ENCODE measurements at regions of chr6 and their contacts with region 1.

Region 1: GRCh38 chr6:95819939-95820338 is 195.8 kb upstream of the FUT9 start:
- DNase-seq: no peak
- ATAC-seq: no peak
- H3K4me3 ChIP-seq: no peak overlapping the region
- H3K27ac ChIP-seq: no peak overlapping the region
- H3K4me1 ChIP-seq: peaks cover 39% of the 10 kb centered on the region
- H3K27me3 ChIP-seq: no peaks in the 10 kb centered on the region
- CTCF ChIP-seq: peak; percentile 20; the same call in 1 of the 2 replicates
- EP300 ChIP-seq: no peak
- POLR2A ChIP-seq: no peak
- RAD21 ChIP-seq: no peak

Region 2: GRCh38 chr6:95577304-95578105 is 242.4 kb before region 1 on chr6 and contains the start of gene MANEA:
- CTCF ChIA-PET with region 1: no interaction called
- POLR2A ChIA-PET with region 1: no interaction called
- in situ Hi-C with region 1: no loop called
- intact Hi-C with region 1: loop called (anchors 5 kb)
- DNase-seq: peak; percentile 61
- ATAC-seq: peak; percentile 96
- H3K4me3 ChIP-seq: peak within 1 kb of the TSS; percentile 73 to 99 (median 78)
- H3K27ac ChIP-seq: peak within 1 kb of the TSS; percentile 83
- H3K4me1 ChIP-seq: peaks cover 35% of the 10 kb centered on the region
- H3K27me3 ChIP-seq: no peaks in the 10 kb centered on the region; a peak in 1 of 5 replicates
- CTCF ChIP-seq: 0 out of 2 replicates have a peak, but pooled peaks have one; percentile 11
- EP300 ChIP-seq: no peak
- POLR2A ChIP-seq: peak; percentile 56 to 61; a peak in 3 of 4 replicates
- RAD21 ChIP-seq: peak; percentile 20; the same call in 1 of the 2 replicates
- total RNA-seq, gene MANEA: 7.6 and 10.9 TPM in 2 replicates

Region 3: DNA sequence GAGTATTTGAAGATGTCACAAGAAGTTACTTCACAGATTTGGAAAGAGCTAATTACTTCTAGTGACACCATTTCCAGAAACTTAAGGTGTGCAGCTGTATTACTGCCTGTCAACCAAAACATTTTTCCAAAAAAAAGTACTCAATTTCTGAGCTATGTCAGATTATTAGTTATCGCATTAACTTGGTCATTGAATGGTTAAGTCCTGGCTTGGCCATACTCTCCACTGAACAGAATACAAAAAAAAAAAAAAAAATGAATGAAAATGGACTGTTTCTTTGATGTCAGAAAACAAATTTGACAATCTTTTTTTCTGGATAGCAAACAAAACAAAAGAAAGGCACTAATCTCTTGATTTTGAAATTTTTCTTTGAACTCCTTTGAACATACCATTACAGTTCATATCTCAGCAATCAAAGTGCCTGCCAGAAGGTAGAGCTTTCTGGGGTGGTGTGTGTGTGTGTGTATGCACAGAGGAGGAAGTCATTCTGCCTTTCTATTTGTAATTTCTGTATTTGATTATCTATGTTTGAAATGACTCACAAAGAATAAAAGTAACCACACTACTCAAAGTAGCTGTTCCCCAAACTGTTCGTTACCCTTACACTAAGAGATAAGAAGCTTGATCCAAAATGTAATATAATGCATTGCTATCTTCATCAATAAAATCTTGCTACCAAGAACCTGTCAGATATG is 14.9 kb before region 1 on chr6:
- CTCF ChIA-PET with region 1: interaction called, 7 read pairs
- POLR2A ChIA-PET with region 1: interaction called, 21 read pairs
- in situ Hi-C with region 1: no loop called
- intact Hi-C with region 1: loop called (anchors 1 kb)
- DNase-seq: peak; percentile 98
- ATAC-seq: peak; percentile 98
- H3K4me3 ChIP-seq: peak overlapping the region in 1 of 3 experiments; percentile 13; a peak in 1 of 6 replicates
- H3K27ac ChIP-seq: peak overlapping the region; percentile 85
- H3K4me1 ChIP-seq: peaks cover 68% of the 10 kb centered on the region
- H3K27me3 ChIP-seq: no peaks in the 10 kb centered on the region
- CTCF ChIP-seq: no peak
- EP300 ChIP-seq: peak; percentile 94 to 99; a peak in 3 of 4 replicates
- POLR2A ChIP-seq: no peak
- RAD21 ChIP-seq: no peak

Region 4: GRCh38 chr6:95830859-95831557 is 11.1 kb after region 1 on chr6:
- CTCF ChIA-PET with region 1: no interaction called
- POLR2A ChIA-PET with region 1: no interaction called
- in situ Hi-C with region 1: no loop called
- intact Hi-C with region 1: loop called (anchors 1 kb)
- DNase-seq: no peak
- ATAC-seq: no peak
- H3K4me3 ChIP-seq: no peak overlapping the region
- H3K27ac ChIP-seq: no peak overlapping the region
- H3K4me1 ChIP-seq: no peaks in the 10 kb centered on the region
- H3K27me3 ChIP-seq: no peaks in the 10 kb centered on the region
- CTCF ChIP-seq: no peak
- EP300 ChIP-seq: no peak
- POLR2A ChIP-seq: no peak
- RAD21 ChIP-seq: no peak

Region 5: GRCh38 chr6:95856876-95857364 is 37.0 kb after region 1 on chr6:
- CTCF ChIA-PET with region 1: no interaction called
- POLR2A ChIA-PET with region 1: interaction called, 4 read pairs
- in situ Hi-C with region 1: no loop called
- intact Hi-C with region 1: loop called (anchors 1 kb)
- DNase-seq: peak; percentile 90
- ATAC-seq: peak; percentile 100
- H3K4me3 ChIP-seq: peak overlapping the region; percentile 33 to 63 (median 35)
- H3K27ac ChIP-seq: peak overlapping the region; percentile 95
- H3K4me1 ChIP-seq: peaks cover 21% of the 10 kb centered on the region
- H3K27me3 ChIP-seq: no peaks in the 10 kb centered on the region
- CTCF ChIP-seq: no peak
- EP300 ChIP-seq: peak in 1 of 2 experiments; percentile 74; a peak in 2 of 4 replicates
- POLR2A ChIP-seq: peak; percentile 60 to 62; a peak in 3 of 4 replicates
- RAD21 ChIP-seq: no peak